Naive thymus-derived CD4-positive, alpha-beta T cell (primary cell): ENCODE measurements at regions of chr9 and their contacts with region 1.

Region 1: DNA sequence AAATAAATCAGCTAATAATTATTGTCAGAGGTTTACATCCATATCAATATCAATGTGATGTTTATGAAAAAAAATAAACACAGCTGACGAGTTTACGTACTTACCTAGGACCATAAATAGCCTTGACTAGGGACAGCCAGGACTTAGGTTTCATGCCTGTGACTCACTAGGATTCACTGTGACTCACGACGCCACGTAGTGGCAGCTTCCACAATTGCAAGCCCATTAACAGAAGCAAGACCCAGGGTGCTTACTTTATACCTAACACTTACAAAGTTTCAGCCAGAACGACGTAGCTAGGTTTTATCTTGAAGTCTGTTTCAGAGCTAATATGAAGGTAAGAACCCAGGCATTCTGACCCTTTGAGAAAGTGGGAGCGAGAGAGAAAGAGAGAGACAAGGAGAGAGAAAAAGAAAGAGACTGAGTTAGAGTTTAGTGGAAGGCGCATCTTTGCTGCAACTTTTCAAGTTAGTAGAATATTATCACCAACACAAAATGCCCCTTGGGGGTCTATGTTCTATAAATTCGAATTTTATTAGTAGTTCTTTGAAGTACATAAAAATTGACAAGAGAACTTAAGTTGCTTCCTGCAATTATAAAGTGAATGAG is 191.2 kb downstream of the GNA14 start:
- DNase-seq: peak; percentile 43 to 77 (median 68)
- ATAC-seq: peak; percentile 83
- H3K4me3 ChIP-seq: no peak overlapping the region
- H3K4me3 Mint-ChIP-seq: no peak overlapping the region
- H3K27ac ChIP-seq: no peak overlapping the region
- H3K27ac Mint-ChIP-seq: no peak overlapping the region
- H3K4me1 ChIP-seq: no peaks in the 10 kb centered on the region
- H3K4me1 Mint-ChIP-seq: peaks cover 9 to 30% (median 24%) of the 10 kb centered on the region in 7 donors
- H3K27me3 ChIP-seq: no peaks in the 10 kb centered on the region
- H3K27me3 Mint-ChIP-seq: no peaks in the 10 kb centered on the region

Region 2: DNA sequence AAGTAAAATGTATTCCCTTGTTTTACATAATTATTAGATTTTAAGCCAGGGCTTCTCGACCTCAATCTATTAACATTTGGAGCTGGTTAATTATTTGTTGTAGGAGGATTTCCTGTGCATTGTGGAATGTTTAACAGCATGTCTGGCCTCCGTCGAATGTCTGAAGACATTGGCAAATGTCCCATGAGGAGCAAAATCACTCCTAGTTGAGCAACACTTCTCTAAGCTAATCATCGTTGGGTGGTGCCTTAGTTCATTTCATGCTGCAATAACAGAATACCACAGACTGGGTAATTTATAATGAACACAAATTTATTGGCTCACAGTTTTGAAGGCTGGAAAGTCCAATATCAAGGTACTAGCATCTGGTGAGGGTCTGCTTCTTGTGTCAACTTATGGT is 293.0 kb before region 1 on chr9:
- CTCF ChIA-PET with region 1: interaction called, 4 read pairs
- POLR2A ChIA-PET with region 1: no interaction called
- intact Hi-C with region 1: loop called in 1 of 2 experiments (anchors 1 kb)
- DNase-seq: no peak
- ATAC-seq: no peak
- H3K4me3 ChIP-seq: no peak overlapping the region
- H3K4me3 Mint-ChIP-seq: no peak overlapping the region
- H3K27ac ChIP-seq: no peak overlapping the region
- H3K27ac Mint-ChIP-seq: no peak overlapping the region
- H3K4me1 ChIP-seq: no peaks in the 10 kb centered on the region
- H3K4me1 Mint-ChIP-seq: no peaks in the 10 kb centered on the region
- H3K27me3 ChIP-seq: no peaks in the 10 kb centered on the region
- H3K27me3 Mint-ChIP-seq: peaks cover 0 to 30% (median 4%) of the 10 kb centered on the region in 5 donors

Region 3: GRCh38 chr9:77442200-77442832 is 14.6 kb before region 1 on chr9:
- CTCF ChIA-PET with region 1: interaction called, 22 read pairs
- POLR2A ChIA-PET with region 1: no interaction called
- intact Hi-C with region 1: no loop called
- DNase-seq: no peak
- ATAC-seq: no peak
- H3K4me3 ChIP-seq: no peak overlapping the region
- H3K4me3 Mint-ChIP-seq: no peak overlapping the region
- H3K27ac ChIP-seq: no peak overlapping the region
- H3K27ac Mint-ChIP-seq: no peak overlapping the region
- H3K4me1 ChIP-seq: no peaks in the 10 kb centered on the region
- H3K4me1 Mint-ChIP-seq: no peaks in the 10 kb centered on the region
- H3K27me3 ChIP-seq: no peaks in the 10 kb centered on the region
- H3K27me3 Mint-ChIP-seq: peaks cover 0 to 8% (median 2%) of the 10 kb centered on the region in 5 donors

Region 4: DNA sequence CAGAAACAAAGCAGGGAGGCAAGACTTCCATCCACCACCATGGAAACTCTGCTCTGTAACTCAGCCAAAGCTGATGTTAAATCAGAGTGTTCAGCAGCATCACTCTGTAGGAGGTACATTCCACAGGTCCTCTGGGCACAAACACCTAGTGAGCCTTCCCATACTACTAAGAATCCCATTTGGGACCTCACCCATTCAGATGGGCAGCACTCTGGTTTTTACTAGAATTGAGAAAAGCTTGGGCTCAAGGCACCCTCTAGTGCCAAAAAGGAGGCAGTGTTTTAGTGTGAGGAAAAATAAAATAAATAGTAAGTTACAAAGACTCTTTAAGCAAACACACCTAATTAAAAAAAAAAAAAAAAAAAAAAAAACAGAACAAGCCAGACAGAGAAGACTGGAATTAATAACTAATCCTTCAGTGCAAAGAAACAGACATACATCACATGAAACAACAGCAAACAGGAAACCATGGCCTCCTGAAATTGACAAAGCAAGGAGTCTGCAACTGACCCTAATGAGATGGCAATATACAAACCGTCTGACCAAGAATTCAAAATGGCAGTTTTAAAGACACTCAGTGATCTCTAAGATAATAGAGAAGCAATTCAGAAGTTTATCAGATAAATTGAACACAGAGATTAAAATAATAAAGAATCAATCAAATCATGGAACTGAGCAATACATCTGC is 31.6 kb after region 1 on chr9:
- CTCF ChIA-PET with region 1: interaction called, 3 read pairs
- POLR2A ChIA-PET with region 1: no interaction called
- intact Hi-C with region 1: loop called (anchors 1 to 2 kb)
- DNase-seq: peak in 1 of 9 donors; percentile 9
- ATAC-seq: no peak
- H3K4me3 ChIP-seq: no peak overlapping the region
- H3K4me3 Mint-ChIP-seq: peak overlapping the region in 9 of 10 donors; percentile 48 to 84 (median 80)
- H3K27ac ChIP-seq: no peak overlapping the region
- H3K27ac Mint-ChIP-seq: peak overlapping the region in 4 of 9 donors; percentile 4 to 68 (median 14)
- H3K4me1 ChIP-seq: no peaks in the 10 kb centered on the region
- H3K4me1 Mint-ChIP-seq: peaks cover 6 to 24% (median 14%) of the 10 kb centered on the region in 7 donors
- H3K27me3 ChIP-seq: peaks cover 0 to 4% of the 10 kb centered on the region in 2 donors
- H3K27me3 Mint-ChIP-seq: peaks cover 3 to 23% (median 12%) of the 10 kb centered on the region in 5 donors

Region 5: DNA sequence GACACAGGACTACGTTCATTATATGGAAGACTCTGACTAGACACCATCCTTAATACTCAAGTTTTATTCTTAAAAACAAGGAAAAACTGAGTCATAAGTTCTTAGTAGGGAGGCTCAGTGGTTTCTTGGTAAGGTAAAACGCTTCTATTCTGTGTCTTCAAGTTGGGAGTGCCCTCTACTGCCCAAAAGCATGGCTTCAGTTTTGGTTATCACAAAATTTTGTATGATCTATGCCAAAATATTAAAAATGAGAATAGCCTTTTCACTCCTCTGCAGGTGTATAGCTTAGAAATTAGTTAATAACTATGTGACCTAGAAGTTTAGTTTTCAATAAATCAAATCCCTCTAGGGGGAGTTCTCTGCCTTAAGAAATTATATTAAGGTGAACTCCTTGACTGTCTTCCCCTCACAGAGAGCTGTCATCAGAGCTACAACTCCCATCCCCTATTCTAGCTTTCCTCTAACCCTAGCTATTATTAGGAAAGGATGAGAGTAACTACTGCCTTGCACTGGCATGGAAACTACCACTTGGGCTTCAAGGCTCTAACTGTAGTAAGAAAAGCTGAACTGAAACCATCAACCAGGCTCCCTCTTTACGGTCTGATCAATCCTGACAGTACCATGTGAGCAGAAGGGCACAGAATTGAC is 384.9 kb after region 1 on chr9:
- CTCF ChIA-PET with region 1: interaction called, 3 read pairs
- POLR2A ChIA-PET with region 1: no interaction called
- intact Hi-C with region 1: loop called (anchors 10 kb)
- DNase-seq: peak in 5 of 9 donors; percentile 4 to 39 (median 17)
- ATAC-seq: peak; percentile 24
- H3K4me3 ChIP-seq: no peak overlapping the region
- H3K4me3 Mint-ChIP-seq: no peak overlapping the region
- H3K27ac ChIP-seq: no peak overlapping the region
- H3K27ac Mint-ChIP-seq: peak overlapping the region in 3 of 9 donors; percentile 17 to 32 (median 19)
- H3K4me1 ChIP-seq: no peaks in the 10 kb centered on the region
- H3K4me1 Mint-ChIP-seq: peaks cover 7 to 25% (median 13%) of the 10 kb centered on the region in 7 donors
- H3K27me3 ChIP-seq: no peaks in the 10 kb centered on the region
- H3K27me3 Mint-ChIP-seq: no peaks in the 10 kb centered on the region

Region 6: DNA sequence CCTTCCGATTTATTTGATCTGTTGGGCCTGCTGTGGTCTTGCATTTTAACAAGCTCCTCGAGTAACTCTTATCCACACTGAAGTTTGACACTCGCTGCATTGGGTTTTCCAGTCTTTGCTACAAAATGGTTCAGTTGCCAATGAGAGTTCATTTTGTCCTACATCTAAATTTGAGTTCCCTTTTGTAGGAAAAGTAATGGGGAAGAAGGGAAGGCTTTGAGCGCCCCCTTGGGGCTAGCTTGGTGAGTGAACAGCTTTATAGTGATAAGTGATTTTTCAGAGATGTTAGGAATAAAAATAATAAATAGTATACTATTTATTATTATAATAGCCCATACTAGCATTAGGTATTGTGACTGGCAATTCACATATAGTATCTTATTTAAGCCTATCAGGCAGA is 664.6 kb after region 1 on chr9:
- CTCF ChIA-PET with region 1: interaction called, 3 read pairs
- POLR2A ChIA-PET with region 1: interaction called, 7 read pairs
- intact Hi-C with region 1: loop called (anchors 1 to 5 kb)
- DNase-seq: peak in 7 of 9 donors; percentile 24 to 55 (median 37)
- ATAC-seq: peak; percentile 44
- H3K4me3 ChIP-seq: no peak overlapping the region
- H3K4me3 Mint-ChIP-seq: no peak overlapping the region
- H3K27ac ChIP-seq: no peak overlapping the region
- H3K27ac Mint-ChIP-seq: peak overlapping the region in 3 of 9 donors; percentile 44 to 94 (median 59)
- H3K4me1 ChIP-seq: peaks cover 17 to 32% of the 10 kb centered on the region in 2 donors
- H3K4me1 Mint-ChIP-seq: peaks cover 27 to 55% (median 47%) of the 10 kb centered on the region in 7 donors
- H3K27me3 ChIP-seq: no peaks in the 10 kb centered on the region
- H3K27me3 Mint-ChIP-seq: peaks cover 0 to 15% (median 0%) of the 10 kb centered on the region in 5 donors

Region 7: DNA sequence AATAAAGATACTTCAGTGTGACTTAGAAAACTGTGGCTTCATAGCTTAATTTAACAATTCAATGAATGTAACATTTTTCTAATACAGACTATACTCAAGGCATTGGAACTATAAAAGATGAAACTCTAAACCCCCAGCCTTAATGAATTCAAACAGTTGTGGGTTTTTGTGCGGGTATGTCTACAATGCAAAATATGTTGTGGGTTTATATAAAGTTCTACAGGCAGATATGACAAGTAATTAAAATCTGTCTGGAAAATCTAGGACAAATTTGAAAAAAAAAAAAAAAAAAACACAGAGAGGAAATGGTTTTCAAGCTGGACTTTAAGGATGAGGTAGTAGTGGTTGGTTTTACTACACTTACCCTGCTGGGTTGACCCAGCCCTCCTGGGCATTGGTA is 1647.3 kb after region 1 on chr9:
- CTCF ChIA-PET with region 1: no interaction called
- POLR2A ChIA-PET with region 1: no interaction called
- intact Hi-C with region 1: no loop called
- DNase-seq: no peak
- ATAC-seq: no peak
- H3K4me3 ChIP-seq: no peak overlapping the region
- H3K4me3 Mint-ChIP-seq: no peak overlapping the region
- H3K27ac ChIP-seq: no peak overlapping the region
- H3K27ac Mint-ChIP-seq: no peak overlapping the region
- H3K4me1 ChIP-seq: no peaks in the 10 kb centered on the region
- H3K4me1 Mint-ChIP-seq: no peaks in the 10 kb centered on the region
- H3K27me3 ChIP-seq: no peaks in the 10 kb centered on the region
- H3K27me3 Mint-ChIP-seq: no peaks in the 10 kb centered on the region